ENCODE measurements at regions of chr3 and their contacts with region 1.

Region 1: DNA sequence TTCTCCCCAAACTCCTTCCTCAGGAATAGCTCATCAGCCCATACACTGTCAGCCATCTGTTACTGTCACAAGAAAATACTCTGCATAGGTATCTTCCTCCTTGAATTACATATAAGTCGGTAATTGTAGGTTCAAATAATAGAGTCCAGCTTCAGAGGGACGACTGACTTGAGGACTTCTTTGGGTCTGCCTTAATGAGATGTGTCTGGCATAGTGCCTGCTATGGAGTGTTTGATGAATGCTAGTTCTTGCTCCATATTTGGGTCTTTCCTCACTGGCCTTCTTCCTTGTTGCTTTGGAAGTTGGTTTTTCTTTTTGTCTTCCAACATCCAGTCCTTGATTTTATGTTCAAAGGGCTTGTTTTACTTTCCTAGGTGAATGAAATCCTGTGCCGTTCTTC is 66.4 kb upstream of the ACKR4 start:
- DNase-seq: no peak
- ATAC-seq: peak; percentile 44
- H3K4me3 ChIP-seq: no peak overlapping the region
- H3K27ac ChIP-seq: no peak overlapping the region
- H3K4me1 ChIP-seq: no peaks in the 10 kb centered on the region
- H3K27me3 ChIP-seq: no peaks in the 10 kb centered on the region
- CTCF ChIP-seq: no peak

Region 2: GRCh38 chr3:132641837-132642538 is 111.4 kb after region 1 on chr3:
- intact Hi-C with region 1: loop called (anchors 5 kb)
- DNase-seq: no peak
- ATAC-seq: peak; percentile 65
- H3K4me3 ChIP-seq: no peak overlapping the region
- H3K27ac ChIP-seq: no peak overlapping the region
- H3K4me1 ChIP-seq: no peaks in the 10 kb centered on the region
- H3K27me3 ChIP-seq: no peaks in the 10 kb centered on the region
- CTCF ChIP-seq: peak; percentile 80

Region 3: GRCh38 chr3:132829101-132829500 is 298.5 kb after region 1 on chr3:
- intact Hi-C with region 1: no loop called
- DNase-seq: no peak
- ATAC-seq: no peak
- H3K4me3 ChIP-seq: no peak overlapping the region
- H3K27ac ChIP-seq: no peak overlapping the region
- H3K4me1 ChIP-seq: no peaks in the 10 kb centered on the region
- H3K27me3 ChIP-seq: no peaks in the 10 kb centered on the region
- CTCF ChIP-seq: no peak

Measured in upper lobe of right lung (tissue), 1 donor.